ENCODE measurements at regions of chr13 and their contacts with region 1.

Region 1: GRCh38 chr13:95269756-95270155 is 31.5 kb downstream of the ABCC4 start:
- DNase-seq: no peak
- ATAC-seq: no peak
- H3K4me3 ChIP-seq: no peak overlapping the region
- H3K27ac ChIP-seq: no peak overlapping the region; the same call in 2 of the 3 replicates
- H3K4me1 ChIP-seq: peaks cover 20 to 48% of the 10 kb centered on the region in 2 experiments; a peak in 4 of 5 replicates
- H3K27me3 ChIP-seq: no peaks in the 10 kb centered on the region
- CTCF ChIP-seq: no peak
- EP300 ChIP-seq: no peak
- POLR2A ChIP-seq: no peak
- RAD21 ChIP-seq: no peak

Region 2: GRCh38 chr13:95207769-95208366 is 61.9 kb before region 1 on chr13:
- CTCF ChIA-PET with region 1: no interaction called
- POLR2A ChIA-PET with region 1: interaction called, 3 read pairs
- in situ Hi-C with region 1: no loop called
- intact Hi-C with region 1: loop called (anchors 2 kb)
- DNase-seq: peak; percentile 41 to 75 (median 54)
- ATAC-seq: peak; percentile 85
- H3K4me3 ChIP-seq: no peak overlapping the region
- H3K27ac ChIP-seq: peak overlapping the region; percentile 45
- H3K4me1 ChIP-seq: peaks cover 11 to 22% of the 10 kb centered on the region in 2 experiments; a peak in 3 of 5 replicates
- H3K27me3 ChIP-seq: no peaks in the 10 kb centered on the region
- CTCF ChIP-seq: no peak
- EP300 ChIP-seq: 0 out of 2 replicates have a peak, but pooled peaks have one; percentile 26
- POLR2A ChIP-seq: no peak
- RAD21 ChIP-seq: no peak

Region 3: DNA sequence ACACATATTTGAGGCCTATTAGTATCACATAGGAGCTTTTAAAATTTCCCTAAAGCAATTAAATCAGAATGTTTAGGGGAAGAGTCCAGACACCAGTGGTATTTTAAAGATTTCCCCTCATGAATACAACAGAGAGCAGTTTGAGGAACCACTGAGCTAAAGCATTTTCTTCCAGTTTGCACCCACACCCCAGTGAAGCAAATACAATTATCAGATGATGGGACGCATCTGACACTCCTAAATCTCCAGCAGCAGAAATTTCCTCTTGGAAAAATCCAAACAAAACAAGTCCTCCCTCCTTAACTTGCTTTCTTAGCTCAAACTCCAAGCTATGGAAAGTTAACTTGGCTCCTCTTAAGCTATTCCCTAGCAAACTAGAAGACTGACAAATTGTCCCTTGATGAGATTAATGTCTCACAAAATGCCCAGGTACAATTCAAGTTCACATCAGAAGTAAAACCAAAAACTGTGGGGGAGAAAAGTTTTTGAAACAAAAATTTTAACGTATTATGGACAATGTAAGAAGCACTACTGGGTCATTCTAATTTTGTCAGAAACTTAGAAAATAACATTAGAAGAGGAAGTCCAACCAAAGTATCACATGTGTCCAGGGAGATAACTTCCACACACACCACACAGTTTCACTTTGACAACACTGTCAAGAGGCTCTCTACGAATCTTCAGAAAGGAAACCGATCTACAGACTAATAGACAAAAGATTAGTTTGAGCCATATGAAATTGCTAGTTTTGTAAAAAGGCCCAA is 42.6 kb before region 1 on chr13:
- CTCF ChIA-PET with region 1: no interaction called
- POLR2A ChIA-PET with region 1: interaction called, 5 read pairs
- in situ Hi-C with region 1: no loop called
- intact Hi-C with region 1: loop called (anchors 5 kb)
- DNase-seq: peak in 1 of 4 experiments; percentile 45
- ATAC-seq: peak; percentile 66
- H3K4me3 ChIP-seq: no peak overlapping the region
- H3K27ac ChIP-seq: peak overlapping the region; percentile 69
- H3K4me1 ChIP-seq: peaks cover 7 to 32% of the 10 kb centered on the region in 2 experiments; a peak in 4 of 5 replicates
- H3K27me3 ChIP-seq: no peaks in the 10 kb centered on the region
- CTCF ChIP-seq: no peak
- EP300 ChIP-seq: no peak
- POLR2A ChIP-seq: no peak
- RAD21 ChIP-seq: no peak

Region 4: DNA sequence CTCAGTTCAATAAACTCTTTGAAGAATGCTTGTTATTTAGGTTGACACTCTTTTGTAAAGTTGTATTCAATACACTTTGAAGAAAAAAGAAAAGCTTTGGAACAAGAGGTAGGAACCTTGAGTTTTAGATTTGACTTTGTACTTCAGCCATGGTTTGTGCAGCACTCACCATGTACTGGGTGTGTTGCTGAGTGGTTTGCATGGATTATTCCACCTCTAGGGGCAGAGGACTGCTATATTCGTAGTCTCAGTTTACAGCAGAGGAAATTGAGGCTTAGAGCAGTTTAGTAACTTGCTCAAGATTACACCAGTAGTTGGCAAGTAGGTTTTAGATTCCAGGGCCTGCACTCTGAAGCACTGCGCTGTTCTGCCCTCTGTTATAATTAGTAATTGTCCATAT is 476.0 kb after region 1 on chr13:
- CTCF ChIA-PET with region 1: no interaction called
- POLR2A ChIA-PET with region 1: no interaction called
- in situ Hi-C with region 1: no loop called
- intact Hi-C with region 1: no loop called
- DNase-seq: peak in 1 of 4 experiments; percentile 11
- ATAC-seq: peak; percentile 84
- H3K4me3 ChIP-seq: no peak overlapping the region
- H3K27ac ChIP-seq: no peak overlapping the region
- H3K4me1 ChIP-seq: peaks cover 0 to 11% of the 10 kb centered on the region in 2 experiments; a peak in 3 of 5 replicates
- H3K27me3 ChIP-seq: no peaks in the 10 kb centered on the region
- CTCF ChIP-seq: 0 out of 6 replicates have a peak, but pooled peaks of 1 of the 3 experiments have one; percentile 24
- EP300 ChIP-seq: no peak
- POLR2A ChIP-seq: no peak
- RAD21 ChIP-seq: no peak

Region 5: DNA sequence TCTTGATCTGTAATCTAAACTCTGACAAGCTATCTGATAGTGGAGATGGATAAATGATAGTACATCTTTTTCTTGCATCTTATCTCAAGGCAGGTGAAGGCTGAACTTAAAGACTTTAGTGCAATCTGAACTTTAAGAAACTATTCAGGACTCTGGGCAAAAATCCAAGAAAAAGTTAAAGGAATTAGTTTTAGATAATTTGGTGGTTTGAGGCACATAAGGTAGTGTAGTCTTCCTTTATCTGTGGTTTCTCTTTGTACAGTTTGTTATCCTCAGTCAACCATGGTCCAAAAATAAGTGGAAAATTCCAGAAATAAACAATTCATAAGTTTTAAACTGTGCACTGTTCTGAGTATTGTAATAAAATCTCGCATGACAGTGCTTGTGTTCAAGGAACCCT is 610.6 kb after region 1 on chr13:
- CTCF ChIA-PET with region 1: no interaction called
- POLR2A ChIA-PET with region 1: no interaction called
- in situ Hi-C with region 1: no loop called
- intact Hi-C with region 1: no loop called
- DNase-seq: no peak
- ATAC-seq: no peak
- H3K4me3 ChIP-seq: no peak overlapping the region
- H3K27ac ChIP-seq: no peak overlapping the region
- H3K4me1 ChIP-seq: no peaks in the 10 kb centered on the region
- H3K27me3 ChIP-seq: no peaks in the 10 kb centered on the region
- CTCF ChIP-seq: no peak
- EP300 ChIP-seq: no peak
- POLR2A ChIP-seq: no peak
- RAD21 ChIP-seq: no peak

Measured in K562 (cell line).